ENCODE measurements at regions of chr5 and their contacts with region 1.

Region 1: GRCh38 chr5:40594811-40595210 is 84.9 kb upstream of the PTGER4 start:
- DNase-seq: no peak
- ATAC-seq: no peak
- H3K4me3 ChIP-seq: no peak overlapping the region
- H3K4me3 Mint-ChIP-seq: no peak overlapping the region
- H3K27ac ChIP-seq: no peak overlapping the region
- H3K27ac Mint-ChIP-seq: no peak overlapping the region
- H3K4me1 ChIP-seq: peaks cover 19 to 21% of the 10 kb centered on the region in 2 donors
- H3K4me1 Mint-ChIP-seq: peaks cover 28% of the 10 kb centered on the region
- H3K27me3 ChIP-seq: no peaks in the 10 kb centered on the region
- H3K27me3 Mint-ChIP-seq: no peaks in the 10 kb centered on the region
- CTCF ChIP-seq: no peak

Region 2: GRCh38 chr5:40021007-40021406 is 573.8 kb before region 1 on chr5:
- CTCF ChIA-PET with region 1: no interaction called
- POLR2A ChIA-PET with region 1: no interaction called
- intact Hi-C with region 1: loop called (anchors 10 kb)
- DNase-seq: peak; percentile 50
- ATAC-seq: peak; percentile 57
- H3K4me3 ChIP-seq: no peak overlapping the region
- H3K4me3 Mint-ChIP-seq: no peak overlapping the region
- H3K27ac ChIP-seq: no peak overlapping the region
- H3K27ac Mint-ChIP-seq: no peak overlapping the region
- H3K4me1 ChIP-seq: peaks cover 5 to 6% of the 10 kb centered on the region in 2 donors
- H3K4me1 Mint-ChIP-seq: peaks cover 20% of the 10 kb centered on the region
- H3K27me3 ChIP-seq: no peaks in the 10 kb centered on the region
- H3K27me3 Mint-ChIP-seq: no peaks in the 10 kb centered on the region
- CTCF ChIP-seq: peak; percentile 57

Region 3: DNA sequence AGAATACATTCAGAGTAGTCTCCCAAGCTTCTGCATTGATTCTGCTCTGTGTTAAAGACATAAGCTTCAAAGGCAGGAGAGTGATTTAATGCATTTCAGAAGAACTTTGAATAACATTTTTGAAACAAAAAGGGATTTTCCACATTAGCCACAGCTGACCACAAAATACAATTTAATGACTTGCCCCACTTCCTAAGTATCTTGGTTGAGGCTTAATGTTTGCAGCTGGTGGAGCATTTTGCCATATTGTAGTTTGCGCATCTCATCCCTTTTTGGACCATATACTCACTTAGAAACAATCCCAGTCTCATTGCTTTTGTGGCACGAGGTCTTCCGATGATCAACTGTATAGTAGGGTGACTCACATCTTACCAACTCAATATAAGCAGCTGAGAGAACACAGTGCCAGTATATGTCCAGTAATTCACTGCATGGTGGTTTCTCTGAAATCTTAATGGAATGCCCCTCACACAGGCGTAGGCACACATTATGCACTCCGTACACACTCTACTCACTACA is 370.9 kb before region 1 on chr5:
- CTCF ChIA-PET with region 1: no interaction called
- POLR2A ChIA-PET with region 1: no interaction called
- intact Hi-C with region 1: loop called (anchors 10 kb)
- DNase-seq: peak; percentile 33
- ATAC-seq: peak; percentile 11
- H3K4me3 ChIP-seq: no peak overlapping the region
- H3K4me3 Mint-ChIP-seq: peak overlapping the region; percentile 62
- H3K27ac ChIP-seq: no peak overlapping the region
- H3K27ac Mint-ChIP-seq: no peak overlapping the region
- H3K4me1 ChIP-seq: peaks cover 14 to 26% of the 10 kb centered on the region in 2 donors
- H3K4me1 Mint-ChIP-seq: peaks cover 34% of the 10 kb centered on the region
- H3K27me3 ChIP-seq: peaks cover 0 to 6% (median 2%) of the 10 kb centered on the region in 4 experiments
- H3K27me3 Mint-ChIP-seq: peaks cover 25% of the 10 kb centered on the region
- CTCF ChIP-seq: no peak

Region 4: DNA sequence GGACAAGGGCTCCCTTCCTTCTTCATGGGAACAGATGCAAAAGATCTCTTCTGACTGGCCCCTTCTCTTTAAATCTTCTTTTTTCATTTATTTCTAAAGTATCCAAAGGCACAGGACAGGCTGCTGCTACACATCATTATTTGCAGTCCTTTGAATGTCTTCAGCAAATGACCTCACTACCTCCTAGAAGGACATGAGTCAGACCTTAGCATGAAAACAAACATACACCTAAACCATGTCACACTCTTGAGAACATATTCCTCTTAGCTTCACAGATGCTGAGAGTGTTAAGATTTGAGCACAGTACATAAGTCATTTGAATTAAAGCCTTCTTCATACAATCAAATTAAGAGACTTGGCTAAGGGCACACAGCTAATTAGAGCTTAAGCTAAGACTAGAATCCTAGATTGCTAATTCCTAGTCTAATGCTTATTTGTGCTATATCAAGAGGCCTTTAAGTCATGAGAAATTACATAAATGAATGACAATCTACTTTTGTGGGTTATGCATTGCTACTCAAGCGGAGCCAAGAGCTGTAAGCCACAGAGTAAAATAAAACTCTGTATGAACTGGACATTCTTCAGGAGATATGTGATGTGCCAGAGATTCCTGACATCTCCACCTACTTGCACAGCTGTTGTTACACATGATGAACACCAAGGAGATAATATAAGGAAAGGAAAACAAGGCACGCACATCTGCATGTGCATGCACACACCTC is 24.2 kb before region 1 on chr5:
- CTCF ChIA-PET with region 1: interaction called, 5 read pairs
- POLR2A ChIA-PET with region 1: interaction called, 3 read pairs
- intact Hi-C with region 1: loop called (anchors 2 kb)
- DNase-seq: peak; percentile 53
- ATAC-seq: peak; percentile 75
- H3K4me3 ChIP-seq: no peak overlapping the region
- H3K4me3 Mint-ChIP-seq: peak overlapping the region; percentile 66
- H3K27ac ChIP-seq: no peak overlapping the region
- H3K27ac Mint-ChIP-seq: peak overlapping the region; percentile 76
- H3K4me1 ChIP-seq: peaks cover 34 to 38% of the 10 kb centered on the region in 2 donors
- H3K4me1 Mint-ChIP-seq: peaks cover 35% of the 10 kb centered on the region
- H3K27me3 ChIP-seq: no peaks in the 10 kb centered on the region
- H3K27me3 Mint-ChIP-seq: peaks cover 4% of the 10 kb centered on the region
- CTCF ChIP-seq: no peak

Region 5: GRCh38 chr5:40605295-40605958 is 10.6 kb after region 1 on chr5:
- CTCF ChIA-PET with region 1: no interaction called
- POLR2A ChIA-PET with region 1: no interaction called
- intact Hi-C with region 1: loop called (anchors 2 kb)
- DNase-seq: no peak
- ATAC-seq: peak; percentile 31
- H3K4me3 ChIP-seq: peak overlapping the region in 1 of 5 experiments; percentile 25
- H3K4me3 Mint-ChIP-seq: peak overlapping the region; percentile 67
- H3K27ac ChIP-seq: peak overlapping the region; percentile 8 to 56
- H3K27ac Mint-ChIP-seq: peak overlapping the region; percentile 77
- H3K4me1 ChIP-seq: peaks cover 36 to 43% of the 10 kb centered on the region in 2 donors
- H3K4me1 Mint-ChIP-seq: peaks cover 59% of the 10 kb centered on the region
- H3K27me3 ChIP-seq: no peaks in the 10 kb centered on the region
- H3K27me3 Mint-ChIP-seq: no peaks in the 10 kb centered on the region
- CTCF ChIP-seq: no peak

Region 6: DNA sequence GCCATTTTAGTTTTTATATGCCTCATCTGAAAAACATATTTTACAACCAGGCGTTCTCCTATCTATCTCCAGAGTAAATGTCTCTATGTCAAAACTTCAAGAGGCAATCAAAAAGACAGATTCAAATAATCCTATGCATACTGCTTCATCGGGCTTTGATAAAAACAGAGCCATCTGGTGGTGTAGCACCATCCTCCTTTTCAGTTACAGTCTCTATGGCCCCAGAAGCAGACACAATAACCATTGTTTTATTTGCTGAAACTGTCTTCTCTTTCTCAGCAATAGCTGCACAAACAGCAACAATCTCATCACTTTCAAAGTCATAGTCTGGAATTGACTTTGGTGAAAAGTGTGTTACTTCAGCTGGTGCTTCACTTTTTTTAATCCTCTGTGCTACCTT is 121.2 kb after region 1 on chr5:
- CTCF ChIA-PET with region 1: no interaction called
- POLR2A ChIA-PET with region 1: no interaction called
- intact Hi-C with region 1: no loop called
- DNase-seq: no peak
- ATAC-seq: no peak
- H3K4me3 ChIP-seq: no peak overlapping the region
- H3K4me3 Mint-ChIP-seq: no peak overlapping the region
- H3K27ac ChIP-seq: no peak overlapping the region
- H3K27ac Mint-ChIP-seq: no peak overlapping the region
- H3K4me1 ChIP-seq: no peaks in the 10 kb centered on the region
- H3K4me1 Mint-ChIP-seq: peaks cover 3% of the 10 kb centered on the region
- H3K27me3 ChIP-seq: no peaks in the 10 kb centered on the region
- H3K27me3 Mint-ChIP-seq: no peaks in the 10 kb centered on the region
- CTCF ChIP-seq: no peak

Region 7: DNA sequence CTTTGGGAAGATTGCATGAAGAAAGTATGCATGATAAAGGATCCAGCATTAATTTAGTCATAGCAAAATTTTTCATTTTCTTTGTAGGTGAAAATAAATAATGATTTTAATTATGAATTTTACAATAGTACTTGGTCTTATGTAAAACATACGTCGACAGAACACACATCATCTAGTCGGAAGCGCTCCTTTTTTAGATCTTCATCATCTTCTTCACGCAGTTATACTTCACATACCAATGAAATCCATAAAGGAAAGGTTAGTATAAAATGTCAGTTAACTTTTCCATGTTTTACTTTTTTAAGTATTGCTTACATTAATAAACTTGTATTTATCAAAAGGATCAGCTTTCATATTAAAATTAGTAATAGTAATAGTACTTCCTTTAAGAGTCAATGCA is 350.3 kb after region 1 on chr5:
- CTCF ChIA-PET with region 1: no interaction called
- POLR2A ChIA-PET with region 1: no interaction called
- intact Hi-C with region 1: no loop called
- DNase-seq: no peak
- ATAC-seq: no peak
- H3K4me3 ChIP-seq: no peak overlapping the region
- H3K4me3 Mint-ChIP-seq: no peak overlapping the region
- H3K27ac ChIP-seq: no peak overlapping the region
- H3K27ac Mint-ChIP-seq: no peak overlapping the region
- H3K4me1 ChIP-seq: no peaks in the 10 kb centered on the region
- H3K4me1 Mint-ChIP-seq: no peaks in the 10 kb centered on the region
- H3K27me3 ChIP-seq: no peaks in the 10 kb centered on the region
- H3K27me3 Mint-ChIP-seq: peaks cover 10% of the 10 kb centered on the region
- CTCF ChIP-seq: no peak